Naive thymus-derived CD4-positive, alpha-beta T cell (primary cell): ENCODE measurements at regions of chr6 and their contacts with region 1.

Region 1: DNA sequence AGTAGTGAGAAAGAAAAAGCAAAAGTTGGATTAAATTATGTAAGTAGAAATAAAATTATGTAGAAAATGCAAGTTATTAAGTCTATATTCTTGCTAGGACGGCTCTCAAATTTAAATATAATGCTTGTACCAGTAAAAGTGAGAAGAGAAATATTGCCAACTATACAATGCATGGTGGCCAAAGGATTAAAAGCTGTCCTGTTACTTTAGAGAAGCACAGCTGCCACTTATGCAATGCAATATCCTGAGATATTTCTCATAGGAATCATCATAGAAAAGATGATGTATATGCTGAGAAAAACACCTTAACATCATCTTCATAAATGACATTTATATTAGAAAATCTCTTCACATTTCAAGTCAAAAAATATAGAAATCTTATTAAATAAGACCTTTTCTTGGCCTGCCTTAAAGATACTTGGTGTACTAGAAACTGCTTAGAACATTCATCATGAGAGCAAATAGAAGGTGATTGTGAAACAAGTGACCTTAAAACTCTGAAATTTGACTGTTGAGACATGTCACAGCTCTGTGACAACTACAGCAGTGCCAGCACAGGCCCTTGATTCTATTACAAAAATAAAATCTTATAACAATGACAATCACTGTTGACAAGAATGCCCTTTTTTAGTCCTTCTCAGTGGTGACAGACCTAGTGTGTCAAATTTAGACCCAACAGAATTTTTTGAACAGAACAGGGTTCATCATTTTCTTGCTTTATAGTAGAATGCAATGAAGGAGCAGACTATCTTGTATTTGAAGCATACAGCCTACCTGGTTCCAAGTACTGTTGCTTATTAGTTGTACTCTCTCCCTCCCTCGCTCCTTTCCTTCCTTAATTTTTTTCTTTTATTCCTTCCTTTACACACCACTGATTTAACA is 173.1 kb downstream of the CLVS2 start:
- DNase-seq: no peak
- ATAC-seq: no peak
- H3K4me3 ChIP-seq: no peak overlapping the region
- H3K4me3 Mint-ChIP-seq: no peak overlapping the region
- H3K27ac ChIP-seq: no peak overlapping the region
- H3K27ac Mint-ChIP-seq: no peak overlapping the region
- H3K4me1 ChIP-seq: no peaks in the 10 kb centered on the region
- H3K4me1 Mint-ChIP-seq: no peaks in the 10 kb centered on the region
- H3K27me3 ChIP-seq: no peaks in the 10 kb centered on the region
- H3K27me3 Mint-ChIP-seq: no peaks in the 10 kb centered on the region

Region 2: GRCh38 chr6:122339661-122340060 is 829.5 kb before region 1 on chr6:
- CTCF ChIA-PET with region 1: no interaction called
- POLR2A ChIA-PET with region 1: no interaction called
- intact Hi-C with region 1: loop called in 1 of 2 experiments (anchors 10 kb)
- DNase-seq: no peak
- ATAC-seq: no peak
- H3K4me3 ChIP-seq: no peak overlapping the region
- H3K4me3 Mint-ChIP-seq: no peak overlapping the region
- H3K27ac ChIP-seq: no peak overlapping the region
- H3K27ac Mint-ChIP-seq: no peak overlapping the region
- H3K4me1 ChIP-seq: no peaks in the 10 kb centered on the region
- H3K4me1 Mint-ChIP-seq: no peaks in the 10 kb centered on the region
- H3K27me3 ChIP-seq: no peaks in the 10 kb centered on the region
- H3K27me3 Mint-ChIP-seq: peaks cover 2 to 27% (median 23%) of the 10 kb centered on the region in 5 donors

Region 3: DNA sequence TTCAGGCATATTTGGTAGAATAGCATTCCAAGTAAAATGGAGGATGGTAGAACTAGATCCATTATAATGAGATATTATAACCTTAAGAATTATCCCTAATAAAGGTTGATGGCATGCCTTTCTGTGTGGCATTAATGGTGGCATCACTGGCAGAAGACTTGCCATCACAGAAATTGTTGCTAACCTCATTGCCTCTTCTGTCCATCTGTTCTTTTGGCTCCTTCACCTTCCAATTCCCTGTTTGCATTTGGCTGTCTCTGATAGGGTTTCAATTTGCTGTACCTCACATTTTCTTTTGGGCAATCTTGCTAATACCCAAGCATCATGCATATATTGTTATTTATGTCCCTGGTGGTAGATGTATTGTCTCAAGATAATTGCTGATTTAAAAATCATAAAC is 281.2 kb before region 1 on chr6:
- CTCF ChIA-PET with region 1: no interaction called
- POLR2A ChIA-PET with region 1: no interaction called
- intact Hi-C with region 1: no loop called
- DNase-seq: no peak
- ATAC-seq: no peak
- H3K4me3 ChIP-seq: no peak overlapping the region
- H3K4me3 Mint-ChIP-seq: no peak overlapping the region
- H3K27ac ChIP-seq: no peak overlapping the region
- H3K27ac Mint-ChIP-seq: no peak overlapping the region
- H3K4me1 ChIP-seq: no peaks in the 10 kb centered on the region
- H3K4me1 Mint-ChIP-seq: no peaks in the 10 kb centered on the region
- H3K27me3 ChIP-seq: no peaks in the 10 kb centered on the region
- H3K27me3 Mint-ChIP-seq: peaks cover 0 to 12% (median 0%) of the 10 kb centered on the region in 5 donors